ENCODE measurements at regions of chr5 and their contacts with region 1.

Region 1: GRCh38 chr5:149618581-149619251 is 37.4 kb downstream of the ARHGEF37 start:
- H3K4me3 ChIP-seq: no peak overlapping the region
- H3K27ac ChIP-seq: no peak overlapping the region
- H3K4me1 ChIP-seq: no peaks in the 10 kb centered on the region
- CTCF ChIP-seq: peak; percentile 77

Region 2: GRCh38 chr5:149381987-149382340 is 236.8 kb before region 1 on chr5:
- CTCF ChIA-PET with region 1: interaction called, 22 read pairs
- POLR2A ChIA-PET with region 1: no interaction called
- H3K4me3 ChIP-seq: no peak overlapping the region
- H3K27ac ChIP-seq: no peak overlapping the region
- H3K4me1 ChIP-seq: no peaks in the 10 kb centered on the region
- CTCF ChIP-seq: peak; percentile 89

Region 3: DNA sequence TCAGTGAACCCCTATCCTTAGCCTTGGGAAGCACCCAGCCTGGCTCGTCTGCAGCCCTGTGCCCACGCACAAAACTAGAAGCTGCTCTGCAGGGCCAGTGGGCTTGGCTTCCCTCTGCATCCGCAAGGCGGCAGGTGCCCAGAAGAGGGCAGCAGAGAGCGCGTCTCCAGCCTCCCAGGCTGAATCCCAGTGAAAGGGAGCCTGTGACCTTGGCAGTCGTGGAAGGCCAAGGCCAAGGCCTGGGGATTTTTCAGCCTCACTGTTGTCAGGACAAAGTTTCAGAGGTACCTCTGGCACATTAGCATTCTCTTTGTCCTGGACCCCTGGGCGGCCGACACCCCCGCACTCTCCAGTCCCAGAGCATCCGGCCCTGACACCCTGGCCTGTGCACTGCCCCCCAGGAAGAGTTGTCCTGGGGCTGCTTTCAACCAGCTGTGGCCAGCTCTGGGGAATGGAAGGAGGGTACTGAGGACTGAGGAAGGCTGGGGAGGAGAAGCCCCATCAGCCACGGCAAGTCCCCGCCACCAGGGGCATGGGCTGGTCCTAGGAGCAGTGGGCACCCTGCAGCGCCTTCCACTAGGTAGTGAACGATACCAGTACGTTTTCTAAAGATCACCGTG is 176.0 kb before region 1 on chr5:
- CTCF ChIA-PET with region 1: interaction called, 23 read pairs
- POLR2A ChIA-PET with region 1: no interaction called
- H3K4me3 ChIP-seq: no peak overlapping the region
- H3K27ac ChIP-seq: no peak overlapping the region
- H3K4me1 ChIP-seq: no peaks in the 10 kb centered on the region
- CTCF ChIP-seq: peak; percentile 88

Region 4: GRCh38 chr5:149581192-149581861 is 37.4 kb before region 1 on chr5 and contains the start of gene ARHGEF37:
- CTCF ChIA-PET with region 1: interaction called, 10 read pairs
- POLR2A ChIA-PET with region 1: interaction called, 3 read pairs
- H3K4me3 ChIP-seq: peak within 1 kb of the TSS; percentile 46
- H3K27ac ChIP-seq: peak within 1 kb of the TSS; percentile 67; the same call in 1 of the 2 replicates
- H3K4me1 ChIP-seq: peaks cover 4% of the 10 kb centered on the region
- CTCF ChIP-seq: no peak

Region 5: GRCh38 chr5:149605998-149606724 is 12.6 kb before region 1 on chr5:
- CTCF ChIA-PET with region 1: interaction called, 50 read pairs
- POLR2A ChIA-PET with region 1: no interaction called
- H3K4me3 ChIP-seq: no peak overlapping the region
- H3K27ac ChIP-seq: no peak overlapping the region
- H3K4me1 ChIP-seq: no peaks in the 10 kb centered on the region
- CTCF ChIP-seq: no peak

Region 6: GRCh38 chr5:149636851-149637246 is 18.1 kb after region 1 on chr5:
- CTCF ChIA-PET with region 1: interaction called, 10 read pairs
- POLR2A ChIA-PET with region 1: no interaction called
- H3K4me3 ChIP-seq: no peak overlapping the region
- H3K27ac ChIP-seq: no peak overlapping the region
- H3K4me1 ChIP-seq: no peaks in the 10 kb centered on the region
- CTCF ChIP-seq: peak; percentile 95

Measured in HEK293 (cell line).